Colonic mucosa (tissue), 4 donors: ENCODE measurements at regions of chr18 and their contacts with region 1.

Region 1: DNA sequence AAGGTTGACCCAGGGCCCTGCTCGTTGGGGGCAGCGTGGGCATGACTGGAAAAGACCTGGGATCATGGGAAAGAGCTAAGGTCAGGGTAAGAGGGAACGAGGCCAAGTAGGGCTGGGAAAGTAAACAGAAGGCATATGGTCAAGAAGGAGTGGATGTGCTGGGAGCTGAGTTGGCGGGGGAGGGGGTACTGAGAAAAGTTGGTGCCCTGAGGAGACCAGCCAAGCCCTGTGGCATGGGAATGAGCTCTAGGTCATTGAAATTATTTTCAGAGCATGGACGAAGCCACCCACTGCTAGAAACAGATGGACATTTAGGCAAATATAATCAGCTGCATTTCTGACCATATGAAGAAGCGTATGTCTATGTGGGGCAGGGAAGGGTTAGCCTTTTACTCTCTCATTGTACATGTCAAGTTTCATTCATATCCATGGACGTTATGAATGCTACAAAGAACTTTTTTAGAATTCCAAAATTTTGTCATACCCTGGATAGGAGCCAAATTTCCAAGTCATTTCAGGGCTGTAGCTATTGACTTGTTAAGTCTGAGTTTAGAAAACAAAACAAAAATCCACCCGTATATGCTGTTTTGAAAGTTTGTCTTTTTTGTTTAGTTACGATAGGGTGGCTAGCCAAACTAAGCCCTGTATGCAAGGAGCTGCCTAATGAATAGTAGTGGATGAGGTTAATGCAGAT is 19.1 kb downstream of the MAPRE2 start:
- DNase-seq: peak; percentile 44
- H3K4me3 ChIP-seq: no peak overlapping the region
- H3K27ac ChIP-seq: no peak overlapping the region
- H3K4me1 ChIP-seq: no peaks in the 10 kb centered on the region
- H3K27me3 ChIP-seq: no peaks in the 10 kb centered on the region
- CTCF ChIP-seq: no peak

Region 2: GRCh38 chr18:34971313-34971712 is 89.0 kb before region 1 on chr18:
- intact Hi-C with region 1: no loop called
- DNase-seq: no peak
- H3K4me3 ChIP-seq: no peak overlapping the region
- H3K27ac ChIP-seq: no peak overlapping the region
- H3K4me1 ChIP-seq: no peaks in the 10 kb centered on the region
- H3K27me3 ChIP-seq: no peaks in the 10 kb centered on the region
- CTCF ChIP-seq: no peak

Region 3: DNA sequence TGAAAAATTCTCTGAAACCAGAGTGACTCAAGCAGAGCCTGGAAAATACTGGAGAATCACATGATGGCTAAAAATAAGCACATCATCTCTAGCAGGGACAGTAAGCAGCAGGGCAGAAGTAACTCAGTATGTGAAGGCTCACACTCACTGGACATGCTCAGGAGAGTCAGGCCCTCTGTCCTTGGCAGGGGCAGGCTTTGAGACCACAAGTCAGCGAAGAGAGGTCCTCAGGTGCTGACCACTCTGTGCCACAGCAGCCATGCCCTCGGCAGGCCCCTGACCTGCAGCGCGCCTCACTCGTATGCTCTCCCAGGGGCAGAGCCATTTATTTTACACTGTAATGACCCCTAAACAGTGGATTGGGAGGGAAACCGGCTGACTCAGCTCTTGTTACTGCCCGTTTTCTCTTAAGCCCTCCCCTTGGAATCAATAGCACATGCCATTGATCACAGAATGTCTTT is 57.7 kb after region 1 on chr18:
- intact Hi-C with region 1: loop called (anchors 5 kb)
- DNase-seq: no peak
- H3K4me3 ChIP-seq: no peak overlapping the region
- H3K27ac ChIP-seq: no peak overlapping the region
- H3K4me1 ChIP-seq: no peaks in the 10 kb centered on the region
- H3K27me3 ChIP-seq: no peaks in the 10 kb centered on the region
- CTCF ChIP-seq: no peak

Region 4: DNA sequence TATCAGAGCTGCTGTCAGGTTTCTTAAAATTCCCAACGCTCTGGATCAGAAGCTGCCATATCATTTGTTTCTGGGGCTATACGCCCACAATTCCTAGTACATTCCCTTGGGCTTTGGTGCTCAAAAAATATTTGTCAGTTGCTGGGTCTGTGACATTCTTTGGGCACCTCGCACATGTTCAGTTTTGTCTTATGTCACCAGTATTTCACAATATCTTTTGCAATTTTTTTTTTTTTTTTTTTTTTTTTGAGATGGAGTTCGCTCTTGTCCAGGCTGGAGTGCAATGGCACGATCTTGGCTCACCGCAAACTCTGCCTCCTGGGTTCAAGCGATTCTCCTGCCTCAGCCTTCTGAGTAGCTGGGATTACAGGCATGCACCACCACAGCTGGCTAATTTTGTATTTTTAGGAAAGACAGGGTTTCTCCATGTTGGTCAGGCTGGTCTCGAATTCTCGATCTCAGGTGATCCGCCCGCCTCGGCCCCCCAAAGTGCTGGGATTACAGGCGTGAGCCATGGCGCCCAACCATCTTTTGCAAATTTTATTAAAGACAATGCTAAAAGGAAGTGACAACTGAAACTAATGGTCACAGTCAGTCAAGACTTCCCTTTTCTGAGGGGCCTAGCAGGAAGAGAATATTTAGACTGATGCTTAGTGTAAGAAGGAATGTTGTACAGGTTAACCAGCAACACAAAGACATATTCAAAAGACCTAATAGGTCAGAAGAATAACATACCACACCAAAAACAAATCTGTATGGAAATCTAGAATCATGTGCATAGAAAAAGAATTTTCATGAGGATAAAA is 187.4 kb after region 1 on chr18:
- intact Hi-C with region 1: no loop called
- DNase-seq: no peak
- H3K4me3 ChIP-seq: no peak overlapping the region
- H3K27ac ChIP-seq: no peak overlapping the region
- H3K4me1 ChIP-seq: no peaks in the 10 kb centered on the region
- H3K27me3 ChIP-seq: no peaks in the 10 kb centered on the region
- CTCF ChIP-seq: no peak